Aorta (tissue), 5 donors: ENCODE measurements at regions of chr14 and their contacts with region 1.

Region 1: GRCh38 chr14:104968153-104968527 is 10.0 kb downstream of the AHNAK2 start:
- DNase-seq: peak; percentile 92 to 93
- ATAC-seq: peak; percentile 53
- H3K4me3 ChIP-seq: no peak overlapping the region
- H3K27ac ChIP-seq: peak overlapping the region in 1 of 2 donors; percentile 13
- H3K4me1 ChIP-seq: no peaks in the 10 kb centered on the region
- H3K27me3 ChIP-seq: no peaks in the 10 kb centered on the region

Region 2: GRCh38 chr14:104895786-104896661 is 72.1 kb before region 1 on chr14:
- intact Hi-C with region 1: loop called in 1 of 2 experiments (anchors 5 kb)
- DNase-seq: peak; percentile 63 to 82
- ATAC-seq: peak; percentile 20
- H3K4me3 ChIP-seq: no peak overlapping the region
- H3K27ac ChIP-seq: no peak overlapping the region
- H3K4me1 ChIP-seq: no peaks in the 10 kb centered on the region
- H3K27me3 ChIP-seq: no peaks in the 10 kb centered on the region

Region 3: DNA sequence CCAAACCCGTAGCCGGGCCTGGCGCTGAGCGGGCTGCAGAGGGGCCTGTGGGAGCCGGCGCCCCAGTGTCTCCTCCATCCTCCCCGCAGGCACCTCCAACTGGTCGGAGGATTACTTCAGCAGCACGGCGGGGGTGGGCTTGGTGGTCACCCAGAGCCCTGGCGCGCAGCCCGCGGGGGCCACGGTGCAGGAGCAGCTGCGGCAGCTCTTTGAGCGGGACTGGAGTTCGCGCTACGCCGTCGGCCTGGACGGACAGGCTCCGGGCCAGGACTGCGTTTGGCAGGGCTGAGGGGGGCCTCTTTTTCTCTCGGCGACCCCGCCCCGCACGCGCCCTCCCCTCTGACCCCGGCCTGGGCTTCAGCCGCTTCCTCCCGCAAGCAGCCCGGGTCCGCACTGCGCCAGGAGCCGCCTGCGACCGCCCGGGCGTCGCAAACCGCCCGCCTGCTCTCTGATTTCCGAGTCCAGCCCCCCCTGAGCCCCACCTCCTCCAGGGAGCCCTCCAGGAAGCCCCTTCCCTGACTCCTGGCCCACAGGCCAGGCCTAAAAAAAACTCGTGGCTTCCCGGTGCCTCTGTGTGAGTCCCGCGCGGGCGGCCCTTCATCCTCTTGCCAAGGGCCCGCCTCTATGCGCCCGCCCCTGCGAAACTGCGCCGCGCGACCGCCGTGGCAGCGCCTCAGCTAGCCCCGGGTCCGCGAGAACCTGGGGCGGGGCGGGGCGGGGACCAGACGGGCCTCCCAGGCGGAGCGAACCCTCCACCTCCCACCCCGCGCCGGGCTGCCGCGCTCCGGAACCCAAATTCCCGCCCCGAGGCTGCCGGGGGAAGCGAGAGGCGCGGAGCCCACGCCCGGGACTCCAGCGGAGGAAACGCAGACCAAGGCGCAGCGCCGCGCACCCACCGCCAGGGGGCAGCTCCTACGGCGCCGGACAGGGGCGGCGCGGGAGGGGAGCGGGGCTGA is 35.2 kb before region 1 on chr14:
- intact Hi-C with region 1: loop called (anchors 2 kb)
- DNase-seq: peak; percentile 93 to 98
- ATAC-seq: peak; percentile 91
- H3K4me3 ChIP-seq: peak overlapping the region; percentile 42 to 48
- H3K27ac ChIP-seq: no peak overlapping the region
- H3K4me1 ChIP-seq: no peaks in the 10 kb centered on the region
- H3K27me3 ChIP-seq: no peaks in the 10 kb centered on the region